ENCODE measurements at regions of chr12 and their contacts with region 1.

Region 1: GRCh38 chr12:113358381-113359132 is at the start of gene PLBD2:
- DNase-seq: peak; percentile 88 to 97
- ATAC-seq: peak; percentile 95 to 99 (median 96)
- H3K4me3 ChIP-seq: peak within 1 kb of the TSS; percentile 67
- H3K4me3 Mint-ChIP-seq: peak within 1 kb of the TSS; percentile 87
- H3K27ac ChIP-seq: peak within 1 kb of the TSS; percentile 61
- H3K27ac Mint-ChIP-seq: peak within 1 kb of the TSS; percentile 70 to 85
- H3K4me1 ChIP-seq: peaks cover 21% of the 10 kb centered on the region
- H3K4me1 Mint-ChIP-seq: peaks cover 15 to 20% of the 10 kb centered on the region in 2 donors
- H3K27me3 ChIP-seq: no peaks in the 10 kb centered on the region
- H3K27me3 Mint-ChIP-seq: peaks cover 0 to 3% of the 10 kb centered on the region in 2 donors
- CTCF ChIP-seq: no peak
- total RNA-seq, gene PLBD2: 15.5 to 18.1 (median 16.3) TPM

Region 2: DNA sequence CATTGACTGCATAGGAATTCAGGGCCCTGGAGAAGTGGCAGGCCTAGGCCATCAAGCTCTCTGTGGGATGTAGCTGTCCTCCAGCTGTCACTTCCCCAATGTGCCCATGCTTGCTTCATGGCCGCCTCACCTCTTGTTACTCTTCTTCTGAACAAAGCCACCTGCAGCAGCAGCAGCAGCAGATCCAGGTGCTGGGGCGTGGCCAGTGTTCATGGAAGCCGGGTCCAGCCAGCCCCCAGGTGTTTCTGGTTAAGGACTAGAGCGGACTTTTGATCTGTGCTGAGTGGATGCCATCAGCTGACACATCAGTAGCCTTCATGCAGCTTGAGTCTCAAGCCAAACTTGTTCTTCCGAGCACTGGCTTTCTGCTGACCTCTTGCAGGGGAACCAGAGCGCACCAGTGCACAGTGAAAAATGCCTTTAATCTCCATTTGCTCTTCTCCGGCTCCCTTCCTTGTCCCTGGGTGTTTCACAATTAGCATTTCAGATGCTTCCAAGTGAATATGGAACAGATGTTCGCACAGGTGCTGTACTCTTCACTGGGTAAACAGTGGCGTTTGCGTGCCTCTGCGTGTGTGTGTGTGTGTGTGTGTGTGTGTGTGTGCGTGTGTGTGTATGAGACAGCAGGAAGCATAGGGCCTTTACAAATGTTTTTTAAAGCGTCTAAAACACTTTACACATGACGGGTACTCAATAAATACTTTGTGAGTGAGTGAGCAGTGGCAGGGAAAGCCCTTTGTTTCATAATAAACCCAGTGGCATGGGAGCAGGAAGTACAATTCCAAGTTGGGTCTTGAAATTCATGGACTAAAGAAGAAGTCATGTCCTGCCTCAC is 117.1 kb before region 1 on chr12:
- intact Hi-C with region 1: no loop called
- DNase-seq: no peak
- ATAC-seq: no peak
- H3K4me3 ChIP-seq: no peak overlapping the region
- H3K4me3 Mint-ChIP-seq: no peak overlapping the region
- H3K27ac ChIP-seq: no peak overlapping the region
- H3K27ac Mint-ChIP-seq: no peak overlapping the region
- H3K4me1 ChIP-seq: peaks cover 11% of the 10 kb centered on the region
- H3K4me1 Mint-ChIP-seq: peaks cover 0 to 4% of the 10 kb centered on the region in 2 donors
- H3K27me3 ChIP-seq: no peaks in the 10 kb centered on the region
- H3K27me3 Mint-ChIP-seq: no peaks in the 10 kb centered on the region
- CTCF ChIP-seq: no peak

Region 3: GRCh38 chr12:113334786-113335540 is 23.6 kb before region 1 on chr12 and contains the start of gene SLC8B1:
- intact Hi-C with region 1: loop called (anchors 1 kb)
- DNase-seq: peak; percentile 84 to 86
- ATAC-seq: peak; percentile 99 to 100 (median 100)
- H3K4me3 ChIP-seq: peak within 1 kb of the TSS; percentile 83
- H3K4me3 Mint-ChIP-seq: peak within 1 kb of the TSS; percentile 93
- H3K27ac ChIP-seq: peak within 1 kb of the TSS; percentile 27
- H3K27ac Mint-ChIP-seq: peak within 1 kb of the TSS; percentile 57 to 74
- H3K4me1 ChIP-seq: peaks cover 30% of the 10 kb centered on the region
- H3K4me1 Mint-ChIP-seq: peaks cover 18 to 40% of the 10 kb centered on the region in 2 donors
- H3K27me3 ChIP-seq: no peaks in the 10 kb centered on the region
- H3K27me3 Mint-ChIP-seq: no peaks in the 10 kb centered on the region
- CTCF ChIP-seq: no peak
- total RNA-seq, gene SLC8B1: 26.1 to 34.4 (median 31.2) TPM